Caco-2 (cell line): ENCODE measurements at regions of chr4 and their contacts with region 1.

Region 1: GRCh38 chr4:173505924-173506518 is 24.0 kb downstream of the HAND2 start:
- DNase-seq: peak in 1 of 2 experiments; percentile 65
- H3K4me3 ChIP-seq: no peak overlapping the region
- H3K4me3 Mint-ChIP-seq: no peak overlapping the region
- H3K27ac Mint-ChIP-seq: no peak overlapping the region
- H3K4me1 ChIP-seq: 0 out of 2 replicates have a peak, but pooled peaks cover 3% of the 10 kb centered on the region
- H3K4me1 Mint-ChIP-seq: no peaks in the 10 kb centered on the region
- H3K27me3 ChIP-seq: no peaks in the 10 kb centered on the region
- H3K27me3 Mint-ChIP-seq: no peaks in the 10 kb centered on the region
- CTCF ChIP-seq: peak; percentile 53 to 69

Region 2: DNA sequence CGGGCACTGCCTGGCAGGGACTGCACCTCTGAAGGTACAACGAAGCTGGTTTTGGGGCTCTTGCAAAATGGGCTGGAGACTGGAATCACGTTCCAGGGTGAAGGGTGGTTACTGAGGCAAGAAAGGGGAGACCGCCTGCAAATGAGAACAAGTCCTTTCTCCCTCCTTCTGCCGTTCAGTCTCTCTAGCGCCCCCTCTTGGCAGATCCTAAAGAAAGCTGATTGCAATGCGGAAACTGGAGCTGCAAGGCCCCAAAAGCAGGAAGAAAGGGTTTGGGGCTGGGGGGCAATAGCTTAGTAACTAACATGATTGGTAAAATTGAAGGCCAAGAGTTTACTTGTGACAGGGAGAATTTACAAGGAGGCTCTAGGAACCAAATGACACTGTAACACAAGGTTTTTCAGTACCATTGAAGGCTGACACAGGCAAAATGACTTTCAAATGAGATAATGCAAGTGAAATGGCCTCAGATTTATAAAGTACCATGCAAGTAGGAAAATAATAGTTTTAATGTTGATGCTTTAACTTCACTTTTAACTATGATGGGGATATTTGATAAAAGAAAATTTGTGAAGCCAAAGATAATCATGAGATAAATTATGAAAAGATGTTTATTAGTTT is 246.7 kb after region 1 on chr4:
- CTCF ChIA-PET with region 1: no interaction called
- POLR2A ChIA-PET with region 1: no interaction called
- intact Hi-C with region 1: loop called (anchors 5 kb)
- DNase-seq: peak; percentile 45 to 53
- H3K4me3 ChIP-seq: no peak overlapping the region
- H3K4me3 Mint-ChIP-seq: no peak overlapping the region
- H3K27ac Mint-ChIP-seq: no peak overlapping the region
- H3K4me1 ChIP-seq: no peaks in the 10 kb centered on the region
- H3K4me1 Mint-ChIP-seq: no peaks in the 10 kb centered on the region
- H3K27me3 ChIP-seq: no peaks in the 10 kb centered on the region
- H3K27me3 Mint-ChIP-seq: peaks cover 2% of the 10 kb centered on the region
- CTCF ChIP-seq: peak; percentile 38 to 39

Region 3: DNA sequence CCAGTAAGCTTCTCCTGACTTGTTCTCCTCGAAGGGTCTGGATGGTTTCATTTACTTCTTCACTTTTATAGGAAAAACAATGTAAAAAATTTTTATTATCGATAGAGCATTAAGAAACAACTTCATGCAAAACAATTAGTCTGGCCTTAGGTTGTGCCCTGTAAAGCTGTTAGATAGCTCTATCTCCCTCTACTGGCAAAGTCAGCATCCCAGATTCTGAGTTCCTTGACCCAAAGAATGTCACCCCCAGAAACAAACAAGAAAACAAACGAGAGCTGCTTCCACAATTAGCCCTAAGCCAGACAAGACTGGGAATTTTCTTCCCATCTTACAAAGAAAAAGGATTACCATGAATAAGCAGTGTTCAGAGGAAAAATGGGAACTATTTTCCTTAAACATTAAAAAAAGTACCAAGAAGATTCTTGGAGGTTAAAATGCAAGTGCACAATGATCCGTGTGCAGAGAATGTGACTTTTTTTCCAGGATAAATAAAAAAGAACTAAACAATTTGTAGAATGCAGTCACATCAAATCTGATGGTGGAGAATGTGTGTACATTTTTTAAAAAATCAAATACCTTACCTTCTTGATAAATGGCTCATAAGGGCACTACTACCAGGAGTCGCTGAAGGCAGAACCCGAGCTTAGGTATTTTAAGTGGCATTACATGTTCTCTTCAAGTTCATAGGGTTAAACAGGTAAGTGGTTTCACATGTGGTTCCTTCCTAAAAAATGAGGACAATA is 484.3 kb after region 1 on chr4:
- CTCF ChIA-PET with region 1: no interaction called
- POLR2A ChIA-PET with region 1: no interaction called
- intact Hi-C with region 1: loop called (anchors 2 kb)
- DNase-seq: peak in 1 of 2 experiments; percentile 16
- H3K4me3 ChIP-seq: no peak overlapping the region
- H3K4me3 Mint-ChIP-seq: no peak overlapping the region
- H3K27ac Mint-ChIP-seq: no peak overlapping the region
- H3K4me1 ChIP-seq: no peaks in the 10 kb centered on the region
- H3K4me1 Mint-ChIP-seq: peaks cover 5% of the 10 kb centered on the region
- H3K27me3 ChIP-seq: no peaks in the 10 kb centered on the region
- H3K27me3 Mint-ChIP-seq: no peaks in the 10 kb centered on the region
- CTCF ChIP-seq: peak; percentile 43 to 58